Heart left ventricle (tissue), 16 donors: ENCODE measurements at regions of chr3 and their contacts with region 1.

Region 1: DNA sequence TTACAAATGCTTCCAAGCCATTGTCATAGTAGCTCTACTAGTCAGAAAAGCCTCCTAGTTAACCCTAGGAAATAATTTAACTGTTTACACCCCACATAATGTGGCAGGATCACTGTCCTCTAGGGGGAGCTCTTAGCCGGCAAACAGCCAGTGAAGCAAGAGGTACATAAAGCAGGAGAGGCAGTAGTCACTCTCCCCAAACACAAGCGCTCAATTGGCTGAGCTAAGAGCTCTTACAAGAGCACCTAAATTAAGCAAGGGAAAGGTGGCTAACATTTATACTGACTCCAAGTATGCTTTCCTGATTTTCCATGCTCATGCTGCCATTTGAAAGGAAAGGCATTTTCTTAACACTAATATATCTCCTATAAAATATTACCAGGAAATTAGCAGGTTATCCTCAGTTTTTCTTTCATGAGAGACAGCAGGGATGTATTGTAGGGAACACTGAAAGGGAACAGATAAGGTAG is 37.6 kb downstream of the NCEH1 start:
- DNase-seq: peak; percentile 39 to 78 (median 67)
- ATAC-seq: peak; percentile 37 to 80 (median 70)
- H3K4me3 ChIP-seq: no peak overlapping the region
- H3K27ac ChIP-seq: peak overlapping the region in 10 of 12 donors; percentile 5 to 61 (median 52)
- H3K4me1 ChIP-seq: peaks cover 0 to 57% (median 24%) of the 10 kb centered on the region in 12 donors
- H3K27me3 ChIP-seq: no peaks in the 10 kb centered on the region
- CTCF ChIP-seq: peak; percentile 61 to 79 (median 70)
- POLR2A ChIP-seq: no peak

Region 2: DNA sequence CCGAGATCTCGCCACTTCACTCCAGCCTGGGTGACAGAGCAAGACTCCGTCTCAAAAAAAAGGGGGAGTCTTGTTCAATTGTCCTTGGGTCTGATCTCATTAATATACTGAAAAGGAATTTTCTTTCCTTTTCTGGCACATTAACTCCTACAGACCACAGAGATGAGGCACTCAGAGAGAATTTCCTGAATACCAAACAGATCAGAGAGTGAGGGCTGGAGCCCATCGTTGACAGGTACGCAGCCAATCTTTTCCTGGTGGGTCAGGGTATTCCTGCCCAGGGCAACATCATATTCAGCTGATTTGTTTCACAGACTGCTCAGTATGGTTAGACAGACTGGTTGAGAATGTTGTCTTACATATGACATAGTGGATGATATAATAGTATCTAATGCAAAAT is 67.2 kb before region 1 on chr3:
- intact Hi-C with region 1: no loop called
- DNase-seq: no peak
- ATAC-seq: no peak
- H3K4me3 ChIP-seq: no peak overlapping the region
- H3K27ac ChIP-seq: peak overlapping the region in 1 of 12 donors; percentile 83
- H3K4me1 ChIP-seq: peaks cover 0 to 23% (median 6%) of the 10 kb centered on the region in 12 donors
- H3K27me3 ChIP-seq: no peaks in the 10 kb centered on the region
- CTCF ChIP-seq: no peak
- POLR2A ChIP-seq: no peak

Region 3: DNA sequence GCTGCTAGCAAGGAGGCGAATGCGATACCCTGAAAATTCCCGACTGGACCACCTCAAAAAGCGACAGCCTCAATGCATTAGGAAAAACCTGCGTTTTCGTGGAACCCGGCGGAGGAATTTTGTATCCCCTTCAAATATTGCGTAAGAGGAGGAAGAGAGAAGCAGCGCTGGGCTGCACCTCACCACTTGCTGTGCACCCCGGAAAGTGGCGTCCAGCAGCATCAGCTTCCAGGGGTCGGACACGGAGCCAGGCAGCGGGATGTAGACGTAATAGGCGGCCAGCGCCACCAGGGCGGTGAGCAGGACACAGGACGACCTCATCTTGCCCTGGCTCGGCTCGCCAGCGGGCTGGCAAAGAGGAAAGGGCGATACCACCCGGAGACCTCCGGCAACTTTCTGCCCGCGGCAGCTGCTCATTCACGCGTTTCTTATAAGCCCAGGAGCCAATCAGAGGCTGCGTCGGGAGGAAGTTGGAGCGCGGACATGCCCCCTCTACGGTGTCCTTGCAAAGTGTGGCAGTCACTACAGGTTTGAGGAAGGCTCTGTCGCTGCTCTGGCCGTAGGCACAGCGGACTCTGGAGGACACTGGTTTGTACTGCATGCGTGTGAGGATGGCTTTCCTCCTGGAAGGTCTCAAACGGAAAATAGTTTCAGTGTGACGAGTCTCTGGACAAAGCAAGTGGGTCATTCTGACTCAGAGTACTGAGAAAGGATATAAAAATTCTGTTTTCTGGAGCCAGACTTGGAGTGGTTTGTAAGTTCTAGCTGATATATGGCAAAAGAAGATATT is 37.6 kb after region 1 on chr3 and contains the start of gene NCEH1:
- intact Hi-C with region 1: loop called (anchors 1 to 5 kb)
- DNase-seq: peak; percentile 90 to 94 (median 92)
- ATAC-seq: peak; percentile 97 to 99 (median 98)
- H3K4me3 ChIP-seq: peak within 1 kb of the TSS; percentile 64 to 95 (median 76)
- H3K27ac ChIP-seq: peak within 1 kb of the TSS; percentile 52 to 97 (median 88)
- H3K4me1 ChIP-seq: peaks cover 0 to 45% (median 19%) of the 10 kb centered on the region in 12 donors
- H3K27me3 ChIP-seq: no peaks in the 10 kb centered on the region
- CTCF ChIP-seq: peak; percentile 67 to 97 (median 88)
- POLR2A ChIP-seq: peak; percentile 59 to 97
- total RNA-seq, gene NCEH1: 39.1 to 72.7 (median 52.0) TPM

Region 4: GRCh38 chr3:172750368-172751174 is 77.3 kb after region 1 on chr3 and contains the start of gene ECT2:
- intact Hi-C with region 1: loop called in 5 of 10 experiments (anchors 2 to 10 kb)
- DNase-seq: peak; percentile 98 to 100 (median 98)
- ATAC-seq: peak; percentile 98 to 100 (median 100)
- H3K4me3 ChIP-seq: peak within 1 kb of the TSS; percentile 40 to 88 (median 74)
- H3K27ac ChIP-seq: peak within 1 kb of the TSS; percentile 14 to 86 (median 81)
- H3K4me1 ChIP-seq: peaks cover 0 to 25% (median 9%) of the 10 kb centered on the region in 12 donors
- H3K27me3 ChIP-seq: no peaks in the 10 kb centered on the region
- CTCF ChIP-seq: peak; percentile 65 to 92 (median 78)
- POLR2A ChIP-seq: peak in 1 of 2 donors; percentile 25
- total RNA-seq, gene ECT2: 3.4 to 9.1 (median 4.4) TPM